CD8-positive, alpha-beta T cell (primary cell): ENCODE measurements at regions of chr9 and their contacts with region 1.

Region 1: GRCh38 chr9:36400332-36401163 is 479 bp upstream of the RNF38 start:
- DNase-seq: peak; percentile 86 to 95 (median 90)
- ATAC-seq: peak; percentile 74
- H3K4me3 ChIP-seq: peak overlapping the region; percentile 70 to 85
- H3K4me3 Mint-ChIP-seq: peak overlapping the region; percentile 92
- H3K27ac ChIP-seq: peak overlapping the region; percentile 88 to 95
- H3K27ac Mint-ChIP-seq: peak overlapping the region; percentile 97
- H3K4me1 ChIP-seq: peaks cover 23% of the 10 kb centered on the region
- H3K4me1 Mint-ChIP-seq: peaks cover 43% of the 10 kb centered on the region
- H3K27me3 ChIP-seq: no peaks in the 10 kb centered on the region
- H3K27me3 Mint-ChIP-seq: no peaks in the 10 kb centered on the region
- CTCF ChIP-seq: no peak

Region 2: DNA sequence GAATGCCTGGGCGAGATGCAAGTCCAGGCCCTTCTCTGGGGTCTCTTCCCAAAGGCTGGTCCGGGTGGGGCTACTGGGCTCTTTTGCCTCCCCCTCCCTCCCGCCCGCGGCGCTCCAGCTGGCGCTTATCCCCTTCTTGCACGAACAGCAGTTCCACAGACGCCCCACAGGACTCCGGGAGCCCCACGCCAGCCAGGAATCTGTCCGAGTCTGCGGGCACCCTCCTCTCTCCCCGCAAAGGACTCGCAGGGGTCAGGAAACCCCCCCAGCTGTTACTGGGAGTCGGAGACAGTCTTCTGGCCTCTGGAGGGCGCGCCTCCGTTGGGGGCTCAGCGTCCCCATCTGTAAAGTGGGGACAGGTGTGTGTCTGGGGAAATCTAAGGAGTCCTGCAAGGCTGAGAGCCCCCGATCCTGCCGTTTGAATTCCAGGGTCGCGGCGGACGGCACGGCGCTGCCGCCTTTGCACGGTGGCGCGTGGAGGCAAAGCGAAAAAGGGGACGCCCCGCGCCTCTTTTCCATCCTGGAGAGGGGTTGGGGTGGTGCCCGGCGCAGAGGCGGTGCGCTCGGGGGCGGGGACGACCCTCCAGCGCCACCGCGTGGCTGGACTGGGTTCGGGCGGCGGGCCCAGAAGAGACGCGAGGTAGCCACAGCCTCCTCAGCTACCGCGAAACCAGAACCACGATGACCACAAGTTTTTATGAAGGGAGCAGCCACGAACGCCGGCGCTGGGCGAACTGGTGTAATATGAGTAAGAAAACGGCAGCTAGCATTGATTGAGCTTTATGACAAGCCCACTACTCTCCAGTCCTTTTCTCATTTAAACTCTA is 234.2 kb before region 1 on chr9:
- CTCF ChIA-PET with region 1: no interaction called
- POLR2A ChIA-PET with region 1: no interaction called
- intact Hi-C with region 1: no loop called
- DNase-seq: peak; percentile 64 to 92 (median 81)
- ATAC-seq: peak; percentile 98
- H3K4me3 ChIP-seq: peak overlapping the region; percentile 34 to 53
- H3K4me3 Mint-ChIP-seq: peak overlapping the region; percentile 70
- H3K27ac ChIP-seq: no peak overlapping the region
- H3K27ac Mint-ChIP-seq: no peak overlapping the region
- H3K4me1 ChIP-seq: peaks cover 7% of the 10 kb centered on the region
- H3K4me1 Mint-ChIP-seq: peaks cover 10% of the 10 kb centered on the region
- H3K27me3 ChIP-seq: no peaks in the 10 kb centered on the region
- H3K27me3 Mint-ChIP-seq: no peaks in the 10 kb centered on the region
- CTCF ChIP-seq: peak; percentile 83

Region 3: GRCh38 chr9:36258208-36258988 is 142.2 kb before region 1 on chr9 and contains the start of gene GNE:
- CTCF ChIA-PET with region 1: no interaction called
- POLR2A ChIA-PET with region 1: no interaction called
- intact Hi-C with region 1: loop called in 1 of 2 experiments (anchors 1 kb)
- DNase-seq: peak; percentile 95 to 99 (median 98)
- ATAC-seq: peak; percentile 89
- H3K4me3 ChIP-seq: peak within 1 kb of the TSS; percentile 85 to 100
- H3K4me3 Mint-ChIP-seq: peak within 1 kb of the TSS; percentile 98
- H3K27ac ChIP-seq: peak within 1 kb of the TSS; percentile 90 to 91
- H3K27ac Mint-ChIP-seq: peak within 1 kb of the TSS; percentile 97
- H3K4me1 ChIP-seq: peaks cover 17% of the 10 kb centered on the region
- H3K4me1 Mint-ChIP-seq: peaks cover 16% of the 10 kb centered on the region
- H3K27me3 ChIP-seq: no peaks in the 10 kb centered on the region
- H3K27me3 Mint-ChIP-seq: no peaks in the 10 kb centered on the region
- CTCF ChIP-seq: no peak
- total RNA-seq, gene GNE: 17.3 to 17.4 TPM

Region 4: DNA sequence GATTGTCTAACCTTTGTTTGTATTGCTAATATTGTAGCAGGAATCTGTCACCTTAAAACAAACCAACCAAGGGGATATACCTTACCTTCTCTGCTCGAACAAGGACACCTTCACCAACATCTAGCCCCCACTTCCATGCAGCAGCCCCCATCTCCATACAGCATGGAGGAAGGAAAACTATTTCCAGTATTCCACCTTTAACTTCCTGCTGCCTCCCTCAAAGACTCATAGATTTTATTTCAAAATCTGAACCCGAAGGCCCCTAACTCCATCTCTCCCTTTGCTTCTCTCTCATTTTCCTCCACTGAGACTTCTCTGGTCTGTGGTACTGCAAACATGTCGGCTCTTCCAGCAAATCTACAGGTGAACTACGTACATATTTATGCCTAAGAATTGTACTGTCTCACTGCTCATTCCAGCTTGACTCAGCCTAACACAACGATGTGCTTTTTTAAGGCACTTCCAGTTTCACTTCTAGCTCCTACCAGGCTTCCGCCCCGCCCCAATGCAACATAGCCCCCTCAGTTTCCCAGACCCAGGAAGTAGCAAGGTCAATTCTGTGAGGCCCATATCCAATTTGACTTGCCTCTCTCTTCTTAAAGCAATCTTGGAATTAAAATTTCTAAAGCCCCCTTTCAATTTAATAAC is 70.2 kb after region 1 on chr9:
- CTCF ChIA-PET with region 1: no interaction called
- POLR2A ChIA-PET with region 1: no interaction called
- intact Hi-C with region 1: loop called in 1 of 2 experiments (anchors 5 kb)
- DNase-seq: peak in 8 of 9 experiments; percentile 42 to 87 (median 64)
- ATAC-seq: peak; percentile 98
- H3K4me3 ChIP-seq: peak overlapping the region; percentile 43 to 45
- H3K4me3 Mint-ChIP-seq: peak overlapping the region; percentile 82
- H3K27ac ChIP-seq: peak overlapping the region; percentile 55 to 85
- H3K27ac Mint-ChIP-seq: peak overlapping the region; percentile 93
- H3K4me1 ChIP-seq: peaks cover 20% of the 10 kb centered on the region
- H3K4me1 Mint-ChIP-seq: peaks cover 42% of the 10 kb centered on the region
- H3K27me3 ChIP-seq: no peaks in the 10 kb centered on the region
- H3K27me3 Mint-ChIP-seq: no peaks in the 10 kb centered on the region
- CTCF ChIP-seq: no peak

Region 5: DNA sequence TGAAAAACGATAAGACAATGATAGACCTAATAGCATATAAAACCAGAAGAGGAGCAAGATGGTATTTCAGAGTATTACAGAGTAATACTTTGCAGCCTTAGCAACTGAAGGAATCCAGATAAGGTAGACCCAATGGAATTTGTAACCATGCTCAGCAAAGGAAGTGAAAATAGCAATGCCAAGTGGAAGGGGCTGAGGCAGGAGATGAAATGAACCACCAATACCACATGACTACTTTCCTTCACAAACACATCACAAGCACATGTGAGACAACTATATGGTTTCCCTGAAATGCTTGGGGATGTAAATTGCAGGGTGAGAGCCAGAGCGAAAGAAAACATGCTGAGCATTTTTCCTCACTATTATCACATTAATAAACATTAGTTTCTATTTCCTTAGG is 92.3 kb after region 1 on chr9:
- CTCF ChIA-PET with region 1: no interaction called
- POLR2A ChIA-PET with region 1: interaction called, 8 read pairs
- intact Hi-C with region 1: loop called in 1 of 2 experiments (anchors 1 kb)
- DNase-seq: peak in 3 of 9 experiments; percentile 21 to 75 (median 54)
- ATAC-seq: peak; percentile 66
- H3K4me3 ChIP-seq: peak overlapping the region; percentile 0 to 17
- H3K4me3 Mint-ChIP-seq: peak overlapping the region; percentile 74
- H3K27ac ChIP-seq: peak overlapping the region in 1 of 2 experiments; percentile 31
- H3K27ac Mint-ChIP-seq: peak overlapping the region; percentile 66
- H3K4me1 ChIP-seq: peaks cover 41% of the 10 kb centered on the region
- H3K4me1 Mint-ChIP-seq: peaks cover 64% of the 10 kb centered on the region
- H3K27me3 ChIP-seq: no peaks in the 10 kb centered on the region
- H3K27me3 Mint-ChIP-seq: no peaks in the 10 kb centered on the region
- CTCF ChIP-seq: no peak

Region 6: DNA sequence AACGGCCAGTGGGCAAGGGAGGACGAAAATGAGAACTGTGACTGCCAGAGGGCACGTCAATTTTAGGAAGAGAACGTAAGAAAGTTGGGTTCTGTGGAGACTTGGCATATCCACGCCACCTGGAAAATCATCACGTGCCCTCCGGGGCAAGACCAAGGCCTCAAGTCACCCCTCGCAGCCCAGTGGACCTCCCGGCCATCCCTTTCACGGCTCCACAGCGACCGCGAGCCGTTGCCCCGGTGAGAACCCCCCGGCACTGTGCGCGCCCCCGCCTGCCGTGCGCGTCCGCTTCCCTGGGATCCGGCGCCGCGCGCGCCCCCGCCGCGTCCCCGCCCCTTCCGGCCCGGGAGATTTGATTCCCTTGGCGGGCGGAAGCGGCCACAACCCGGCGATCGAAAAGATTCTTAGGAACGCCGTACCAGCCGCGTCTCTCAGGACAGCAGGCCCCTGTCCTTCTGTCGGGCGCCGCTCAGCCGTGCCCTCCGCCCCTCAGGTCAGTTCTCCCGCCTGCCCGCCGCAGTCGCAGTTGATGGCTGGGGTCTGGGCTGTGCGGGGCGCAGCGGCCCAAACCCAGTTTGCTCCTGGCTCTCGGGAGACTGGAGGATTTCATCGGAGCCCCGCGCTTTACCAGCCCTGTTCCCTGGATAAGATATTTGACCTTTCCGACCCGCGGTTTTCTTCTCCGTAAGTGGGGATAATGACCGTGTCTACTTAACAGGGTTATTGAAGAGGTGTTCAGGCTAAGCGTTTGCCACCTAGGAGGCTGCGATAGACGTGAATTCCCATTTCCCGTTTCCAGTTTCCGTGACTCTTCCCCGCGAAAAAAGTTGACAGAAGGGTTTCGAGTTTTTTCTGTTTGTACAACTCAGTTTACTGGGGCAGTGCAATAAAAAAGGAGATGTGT is 172.2 kb after region 1 on chr9 and contains the start of gene MELK:
- CTCF ChIA-PET with region 1: no interaction called
- POLR2A ChIA-PET with region 1: no interaction called
- intact Hi-C with region 1: loop called (anchors 1 kb)
- DNase-seq: peak; percentile 69 to 91 (median 82)
- ATAC-seq: peak; percentile 83
- H3K4me3 ChIP-seq: peak within 1 kb of the TSS; percentile 70
- H3K4me3 Mint-ChIP-seq: peak within 1 kb of the TSS; percentile 87
- H3K27ac ChIP-seq: peak within 1 kb of the TSS; percentile 63 to 72
- H3K27ac Mint-ChIP-seq: peak within 1 kb of the TSS; percentile 55
- H3K4me1 ChIP-seq: peaks cover 10% of the 10 kb centered on the region
- H3K4me1 Mint-ChIP-seq: peaks cover 9% of the 10 kb centered on the region
- H3K27me3 ChIP-seq: no peaks in the 10 kb centered on the region
- H3K27me3 Mint-ChIP-seq: peaks cover 3% of the 10 kb centered on the region
- CTCF ChIP-seq: no peak
- total RNA-seq, gene MELK: 0.24 TPM in 1 of 2 experiments, not detected in the other

Region 7: DNA sequence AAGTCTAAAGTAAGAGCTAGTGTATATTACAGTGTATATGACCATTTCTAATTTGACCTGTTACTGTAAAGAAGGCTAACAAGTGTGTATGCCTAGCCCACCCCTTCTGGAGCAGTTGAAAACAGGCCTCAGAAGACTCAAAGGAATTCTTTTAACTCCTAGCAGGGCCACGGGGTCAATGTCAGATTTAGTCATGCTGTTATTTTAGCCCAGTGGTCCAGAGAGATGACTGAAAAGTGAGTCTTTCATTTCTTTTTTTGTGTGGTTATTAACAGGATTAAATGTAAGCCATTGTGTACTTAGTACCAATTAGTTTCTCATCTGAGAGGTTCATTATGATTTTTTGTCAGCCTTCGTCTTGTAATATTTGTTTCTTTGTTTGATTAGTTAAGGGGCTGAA is 744.2 kb after region 1 on chr9:
- CTCF ChIA-PET with region 1: no interaction called
- POLR2A ChIA-PET with region 1: no interaction called
- intact Hi-C with region 1: loop called in 1 of 2 experiments (anchors 10 kb)
- DNase-seq: no peak
- ATAC-seq: no peak
- H3K4me3 ChIP-seq: no peak overlapping the region
- H3K4me3 Mint-ChIP-seq: peak overlapping the region; percentile 29
- H3K27ac ChIP-seq: peak overlapping the region in 1 of 2 experiments; percentile 22
- H3K27ac Mint-ChIP-seq: peak overlapping the region; percentile 85
- H3K4me1 ChIP-seq: peaks cover 36% of the 10 kb centered on the region
- H3K4me1 Mint-ChIP-seq: peaks cover 63% of the 10 kb centered on the region
- H3K27me3 ChIP-seq: no peaks in the 10 kb centered on the region
- H3K27me3 Mint-ChIP-seq: no peaks in the 10 kb centered on the region
- CTCF ChIP-seq: no peak